ENCODE measurements at regions of chr2 and their contacts with region 1.

Region 1: GRCh38 chr2:13006829-13007717 is 290.3 kb downstream of the TRIB2 start:
- DNase-seq: peak; percentile 58 to 76 (median 67)
- H3K4me3 ChIP-seq: peak overlapping the region; percentile 28
- H3K27ac ChIP-seq: peak overlapping the region in 1 of 2 donors; percentile 62
- H3K4me1 ChIP-seq: no peaks in the 10 kb centered on the region
- H3K27me3 ChIP-seq: no peaks in the 10 kb centered on the region
- CTCF ChIP-seq: peak; percentile 84 to 86 (median 86)
- EP300 ChIP-seq: no peak
- POLR2A ChIP-seq: no peak

Region 2: GRCh38 chr2:11829947-11830707 is 1176.9 kb before region 1 on chr2:
- intact Hi-C with region 1: loop called in 1 of 4 experiments (anchors 10 kb)
- DNase-seq: peak; percentile 66 to 72 (median 69)
- H3K4me3 ChIP-seq: peak overlapping the region; percentile 19
- H3K27ac ChIP-seq: peak overlapping the region in 1 of 2 donors; percentile 74
- H3K4me1 ChIP-seq: peaks cover 8% of the 10 kb centered on the region
- H3K27me3 ChIP-seq: no peaks in the 10 kb centered on the region
- CTCF ChIP-seq: peak in 1 of 3 donors; percentile 18
- EP300 ChIP-seq: no peak
- POLR2A ChIP-seq: no peak

Region 3: GRCh38 chr2:11863513-11864328 is 1143.4 kb before region 1 on chr2:
- intact Hi-C with region 1: loop called in 1 of 4 experiments (anchors 5 kb)
- DNase-seq: peak; percentile 81 to 90 (median 88)
- H3K4me3 ChIP-seq: no peak overlapping the region
- H3K27ac ChIP-seq: peak overlapping the region in 1 of 2 donors; percentile 47
- H3K4me1 ChIP-seq: no peaks in the 10 kb centered on the region
- H3K27me3 ChIP-seq: no peaks in the 10 kb centered on the region
- CTCF ChIP-seq: peak; percentile 87 to 92 (median 90)
- EP300 ChIP-seq: no peak
- POLR2A ChIP-seq: peak; percentile 22

Region 4: GRCh38 chr2:12416600-12416999 is 590.5 kb before region 1 on chr2:
- intact Hi-C with region 1: loop called in 1 of 4 experiments (anchors 10 kb)
- DNase-seq: peak; percentile 69 to 82 (median 74)
- H3K4me3 ChIP-seq: no peak overlapping the region
- H3K27ac ChIP-seq: peak overlapping the region in 1 of 2 donors; percentile 1
- H3K4me1 ChIP-seq: peaks cover 6% of the 10 kb centered on the region
- H3K27me3 ChIP-seq: no peaks in the 10 kb centered on the region
- CTCF ChIP-seq: peak; percentile 40 to 53 (median 46)
- EP300 ChIP-seq: no peak
- POLR2A ChIP-seq: no peak

Region 5: DNA sequence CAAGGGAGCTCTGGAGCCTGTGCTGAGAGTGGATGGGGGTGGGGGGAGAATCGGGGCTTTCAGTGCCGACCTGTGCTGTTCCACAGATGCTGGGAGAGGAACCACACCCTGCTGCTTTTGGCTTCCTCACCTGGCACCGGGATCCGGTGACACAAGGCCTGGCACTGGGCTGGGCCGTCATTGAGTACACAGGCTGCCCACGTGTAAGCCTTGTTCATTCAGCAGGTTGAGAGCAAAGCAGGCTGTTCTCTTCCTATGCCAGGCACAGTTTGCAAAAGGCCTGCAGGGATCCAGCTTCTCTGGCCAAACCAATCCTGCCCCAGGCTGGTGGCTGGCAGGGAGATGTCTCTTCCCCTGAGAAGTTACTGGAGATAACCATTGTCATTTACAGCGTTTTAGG is 273.2 kb before region 1 on chr2:
- intact Hi-C with region 1: loop called in 1 of 4 experiments (anchors 10 kb)
- DNase-seq: no peak
- H3K4me3 ChIP-seq: no peak overlapping the region
- H3K27ac ChIP-seq: peak overlapping the region; percentile 22 to 55
- H3K4me1 ChIP-seq: peaks cover 43% of the 10 kb centered on the region
- H3K27me3 ChIP-seq: no peaks in the 10 kb centered on the region
- CTCF ChIP-seq: no peak
- EP300 ChIP-seq: no peak
- POLR2A ChIP-seq: no peak

Region 6: DNA sequence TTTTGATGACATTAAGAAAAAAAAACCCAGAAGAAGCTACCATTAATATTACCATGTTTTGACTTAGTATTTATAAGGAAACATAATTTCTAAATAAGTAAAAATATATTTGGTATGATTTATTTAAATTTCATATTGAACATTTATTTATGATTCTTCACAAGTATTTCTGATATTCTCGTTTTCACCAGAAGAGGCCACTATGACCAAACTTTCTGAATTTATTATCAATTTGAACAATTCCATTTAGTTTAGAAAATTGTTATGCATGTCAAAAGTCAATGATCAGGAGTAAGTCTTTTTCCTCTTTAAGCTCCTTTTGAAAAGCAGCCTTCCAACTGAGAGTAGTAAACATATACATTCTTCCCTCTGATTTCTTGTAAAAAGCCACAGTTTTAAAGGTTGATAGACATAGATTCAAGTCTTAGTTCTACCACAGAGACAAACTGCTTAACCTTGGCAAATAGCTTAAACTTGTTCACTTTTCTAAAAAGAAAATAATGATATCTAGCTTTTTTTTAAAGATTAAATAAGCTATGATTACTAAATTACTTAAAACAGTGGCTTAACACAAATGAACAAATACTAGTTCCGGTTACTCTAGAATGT is 39.6 kb after region 1 on chr2:
- intact Hi-C with region 1: no loop called
- DNase-seq: no peak
- H3K4me3 ChIP-seq: no peak overlapping the region
- H3K27ac ChIP-seq: no peak overlapping the region
- H3K4me1 ChIP-seq: no peaks in the 10 kb centered on the region
- H3K27me3 ChIP-seq: no peaks in the 10 kb centered on the region
- CTCF ChIP-seq: no peak
- EP300 ChIP-seq: no peak
- POLR2A ChIP-seq: no peak